ENCODE measurements at regions of chr14 and their contacts with region 1.

Region 1: GRCh38 chr14:20697273-20698017 is 8.9 kb downstream of the ANG start:
- DNase-seq: peak; percentile 75 to 87 (median 81)
- H3K4me3 ChIP-seq: peak overlapping the region in 1 of 7 experiments; percentile 27
- H3K27ac ChIP-seq: no peak overlapping the region
- H3K4me1 ChIP-seq: peaks cover 0 to 7% (median 5%) of the 10 kb centered on the region in 4 experiments
- H3K27me3 ChIP-seq: no peaks in the 10 kb centered on the region

Region 2: GRCh38 chr14:20757965-20758364 is 60.5 kb after region 1 on chr14:
- CTCF ChIA-PET with region 1: interaction called, 14 read pairs
- POLR2A ChIA-PET with region 1: no interaction called
- DNase-seq: peak; percentile 45 to 67 (median 59)
- H3K4me3 ChIP-seq: no peak overlapping the region
- H3K27ac ChIP-seq: no peak overlapping the region
- H3K4me1 ChIP-seq: peaks cover 0 to 8% (median 0%) of the 10 kb centered on the region in 4 experiments
- H3K27me3 ChIP-seq: no peaks in the 10 kb centered on the region

Region 3: DNA sequence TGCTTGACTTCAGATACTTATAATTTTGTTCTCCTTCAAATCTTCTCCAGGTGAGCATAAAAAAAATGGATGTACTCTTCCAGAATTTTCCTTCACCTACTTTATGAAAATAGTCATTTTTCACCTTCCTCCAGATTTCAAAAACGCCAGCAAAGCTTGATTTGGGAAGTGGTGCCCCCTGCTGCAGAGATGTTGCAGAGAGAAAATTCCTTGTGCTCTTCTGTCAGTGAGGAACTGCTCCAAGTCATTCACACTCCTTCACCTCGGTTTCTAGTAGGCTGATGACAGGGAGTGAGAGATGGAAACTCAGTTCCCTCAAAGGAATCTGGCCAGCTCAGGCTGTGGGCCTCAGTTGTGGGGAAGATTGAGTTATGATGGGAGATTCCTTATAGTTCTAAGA is 169.5 kb after region 1 on chr14:
- CTCF ChIA-PET with region 1: interaction called, 10 read pairs
- POLR2A ChIA-PET with region 1: no interaction called
- DNase-seq: peak; percentile 15 to 35 (median 18)
- H3K4me3 ChIP-seq: no peak overlapping the region
- H3K27ac ChIP-seq: no peak overlapping the region
- H3K4me1 ChIP-seq: no peaks in the 10 kb centered on the region
- H3K27me3 ChIP-seq: no peaks in the 10 kb centered on the region